CD8-positive, alpha-beta T cell (primary cell): ENCODE measurements at regions of chr1 and their contacts with region 1.

Region 1: GRCh38 chr1:38859561-38860453 is at the start of gene RRAGC:
- DNase-seq: peak; percentile 95 to 99 (median 98)
- ATAC-seq: peak; percentile 96
- H3K4me3 ChIP-seq: peak within 1 kb of the TSS; percentile 79 to 85
- H3K4me3 Mint-ChIP-seq: peak within 1 kb of the TSS; percentile 90
- H3K27ac ChIP-seq: peak within 1 kb of the TSS; percentile 48 to 68
- H3K27ac Mint-ChIP-seq: peak within 1 kb of the TSS; percentile 86
- H3K4me1 ChIP-seq: peaks cover 22% of the 10 kb centered on the region
- H3K4me1 Mint-ChIP-seq: peaks cover 67% of the 10 kb centered on the region
- H3K27me3 ChIP-seq: no peaks in the 10 kb centered on the region
- H3K27me3 Mint-ChIP-seq: no peaks in the 10 kb centered on the region
- CTCF ChIP-seq: no peak
- total RNA-seq, gene RRAGC: 13.6 to 14.7 TPM

Region 2: GRCh38 chr1:37595440-37596319 is 1264.1 kb before region 1 on chr1 and contains the start of gene GNL2:
- CTCF ChIA-PET with region 1: no interaction called
- POLR2A ChIA-PET with region 1: no interaction called
- intact Hi-C with region 1: loop called in 1 of 2 experiments (anchors 10 kb)
- DNase-seq: peak; percentile 92 to 99 (median 96)
- ATAC-seq: peak; percentile 95
- H3K4me3 ChIP-seq: peak within 1 kb of the TSS; percentile 67 to 88
- H3K4me3 Mint-ChIP-seq: peak within 1 kb of the TSS; percentile 100
- H3K27ac ChIP-seq: peak within 1 kb of the TSS; percentile 68 to 93
- H3K27ac Mint-ChIP-seq: peak within 1 kb of the TSS; percentile 99
- H3K4me1 ChIP-seq: peaks cover 23% of the 10 kb centered on the region
- H3K4me1 Mint-ChIP-seq: peaks cover 36% of the 10 kb centered on the region
- H3K27me3 ChIP-seq: no peaks in the 10 kb centered on the region
- H3K27me3 Mint-ChIP-seq: no peaks in the 10 kb centered on the region
- CTCF ChIP-seq: no peak
- total RNA-seq, gene GNL2: 54.6 to 55.2 TPM

Region 3: GRCh38 chr1:37931361-37932158 is 928.2 kb before region 1 on chr1:
- CTCF ChIA-PET with region 1: no interaction called
- POLR2A ChIA-PET with region 1: interaction called, 3 read pairs
- intact Hi-C with region 1: loop called in 1 of 2 experiments (anchors 1 kb)
- DNase-seq: peak; percentile 96 to 98 (median 97)
- ATAC-seq: peak; percentile 98
- H3K4me3 ChIP-seq: peak overlapping the region; percentile 79 to 89
- H3K4me3 Mint-ChIP-seq: peak overlapping the region; percentile 100
- H3K27ac ChIP-seq: peak overlapping the region; percentile 40 to 66
- H3K27ac Mint-ChIP-seq: peak overlapping the region; percentile 89
- H3K4me1 ChIP-seq: peaks cover 26% of the 10 kb centered on the region
- H3K4me1 Mint-ChIP-seq: peaks cover 40% of the 10 kb centered on the region
- H3K27me3 ChIP-seq: no peaks in the 10 kb centered on the region
- H3K27me3 Mint-ChIP-seq: no peaks in the 10 kb centered on the region
- CTCF ChIP-seq: no peak

Region 4: GRCh38 chr1:38873027-38873969 is 13.5 kb after region 1 on chr1 and contains the start of gene MYCBP:
- CTCF ChIA-PET with region 1: interaction called, 5 read pairs
- POLR2A ChIA-PET with region 1: interaction called, 22 read pairs
- intact Hi-C with region 1: loop called (anchors 1 kb)
- DNase-seq: peak; percentile 94 to 98 (median 97)
- ATAC-seq: peak; percentile 98
- H3K4me3 ChIP-seq: peak within 1 kb of the TSS; percentile 56 to 92
- H3K4me3 Mint-ChIP-seq: peak within 1 kb of the TSS; percentile 93
- H3K27ac ChIP-seq: peak within 1 kb of the TSS; percentile 67 to 71
- H3K27ac Mint-ChIP-seq: peak within 1 kb of the TSS; percentile 84
- H3K4me1 ChIP-seq: peaks cover 16% of the 10 kb centered on the region
- H3K4me1 Mint-ChIP-seq: peaks cover 31% of the 10 kb centered on the region
- H3K27me3 ChIP-seq: no peaks in the 10 kb centered on the region
- H3K27me3 Mint-ChIP-seq: no peaks in the 10 kb centered on the region
- CTCF ChIP-seq: no peak
- total RNA-seq, gene MYCBP: 2.0 to 3.2 TPM

Region 5: GRCh38 chr1:39026051-39026865 is 166.5 kb after region 1 on chr1 and contains the start of gene NDUFS5:
- CTCF ChIA-PET with region 1: no interaction called
- POLR2A ChIA-PET with region 1: interaction called, 5 read pairs
- intact Hi-C with region 1: loop called (anchors 1 kb)
- DNase-seq: peak; percentile 62 to 93 (median 83)
- ATAC-seq: peak; percentile 94
- H3K4me3 ChIP-seq: peak within 1 kb of the TSS; percentile 70 to 86
- H3K4me3 Mint-ChIP-seq: peak within 1 kb of the TSS; percentile 95
- H3K27ac ChIP-seq: peak within 1 kb of the TSS; percentile 74 to 88
- H3K27ac Mint-ChIP-seq: peak within 1 kb of the TSS; percentile 97
- H3K4me1 ChIP-seq: peaks cover 17% of the 10 kb centered on the region
- H3K4me1 Mint-ChIP-seq: peaks cover 31% of the 10 kb centered on the region
- H3K27me3 ChIP-seq: no peaks in the 10 kb centered on the region
- H3K27me3 Mint-ChIP-seq: no peaks in the 10 kb centered on the region
- CTCF ChIP-seq: no peak
- total RNA-seq, gene NDUFS5: 93.1 to 105 TPM

Region 6: GRCh38 chr1:39408641-39409054 is 548.8 kb after region 1 on chr1:
- CTCF ChIA-PET with region 1: no interaction called
- POLR2A ChIA-PET with region 1: no interaction called
- intact Hi-C with region 1: loop called in 1 of 2 experiments (anchors 5 kb)
- DNase-seq: peak; percentile 50 to 91 (median 83)
- ATAC-seq: peak; percentile 87
- H3K4me3 ChIP-seq: peak overlapping the region; percentile 50 to 55
- H3K4me3 Mint-ChIP-seq: peak overlapping the region; percentile 88
- H3K27ac ChIP-seq: peak overlapping the region in 1 of 2 experiments; percentile 38
- H3K27ac Mint-ChIP-seq: no peak overlapping the region
- H3K4me1 ChIP-seq: peaks cover 35% of the 10 kb centered on the region
- H3K4me1 Mint-ChIP-seq: peaks cover 45% of the 10 kb centered on the region
- H3K27me3 ChIP-seq: no peaks in the 10 kb centered on the region
- H3K27me3 Mint-ChIP-seq: no peaks in the 10 kb centered on the region
- CTCF ChIP-seq: no peak